ENCODE measurements at regions of chr14 and their contacts with region 1.

Region 1: GRCh38 chr14:100662879-100663760 is 63.6 kb upstream of the DLK1 start:
- DNase-seq: peak; percentile 20
- H3K4me3 ChIP-seq: no peak overlapping the region
- H3K27ac ChIP-seq: no peak overlapping the region
- H3K4me1 ChIP-seq: no peaks in the 10 kb centered on the region
- H3K27me3 ChIP-seq: no peaks in the 10 kb centered on the region
- CTCF ChIP-seq: peak; percentile 86 to 89

Region 2: DNA sequence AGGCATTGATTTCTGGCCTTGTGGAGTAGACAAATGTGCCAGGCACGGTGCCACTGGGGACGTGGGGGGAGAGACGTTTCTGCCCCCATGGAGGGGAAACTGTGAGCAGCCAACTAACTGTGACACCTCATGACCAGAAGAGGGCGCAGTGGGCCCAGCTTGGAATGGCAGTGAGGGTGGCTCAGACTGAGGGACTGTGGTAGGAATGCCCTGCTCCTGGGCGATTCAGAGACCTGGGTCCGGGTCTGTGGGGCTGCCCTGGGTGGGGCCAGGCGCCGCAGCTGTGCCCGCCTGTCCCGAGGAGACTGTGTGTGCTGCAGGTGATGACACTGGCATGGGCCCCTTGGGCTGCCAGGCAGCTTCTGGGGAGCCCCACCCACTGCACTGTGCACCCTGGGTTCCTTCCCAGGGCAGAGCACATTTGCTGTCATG is 279.4 kb before region 1 on chr14:
- CTCF ChIA-PET with region 1: no interaction called
- dilution Hi-C with region 1: no loop called
- in situ Hi-C with region 1: no loop called
- intact Hi-C with region 1: no loop called
- DNase-seq: peak; percentile 35
- H3K4me3 ChIP-seq: no peak overlapping the region
- H3K27ac ChIP-seq: no peak overlapping the region
- H3K4me1 ChIP-seq: peaks cover 17% of the 10 kb centered on the region
- H3K27me3 ChIP-seq: no peaks in the 10 kb centered on the region
- CTCF ChIP-seq: peak; percentile 88 to 91

Region 3: DNA sequence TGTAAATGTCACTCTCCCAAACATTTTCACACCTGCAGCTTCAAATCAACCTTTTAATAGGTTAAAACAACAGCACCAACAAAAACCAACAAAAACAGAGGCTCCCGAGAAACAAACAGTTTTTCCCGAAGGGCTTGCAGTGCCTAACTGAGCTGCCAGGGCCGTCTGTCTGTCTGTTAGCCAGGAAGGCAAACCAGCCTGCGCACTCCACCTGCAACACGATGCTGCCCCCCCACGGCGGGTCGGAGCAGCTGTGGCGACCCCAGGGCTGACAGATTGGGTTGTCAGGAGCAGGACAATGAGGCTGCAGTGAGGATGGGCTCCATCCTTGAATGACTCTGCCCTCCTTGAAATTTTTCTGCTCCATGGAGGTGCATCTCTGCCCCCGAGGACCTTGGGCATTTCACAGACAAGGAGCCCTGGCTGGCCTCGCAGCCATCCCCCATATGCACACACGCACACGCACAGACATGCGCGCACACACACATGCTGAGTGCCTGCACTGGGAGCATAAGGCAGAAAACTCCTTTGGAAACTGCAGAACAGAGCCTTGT is 237.8 kb after region 1 on chr14:
- CTCF ChIA-PET with region 1: no interaction called
- dilution Hi-C with region 1: no loop called
- in situ Hi-C with region 1: no loop called
- intact Hi-C with region 1: loop called (anchors 5 kb)
- DNase-seq: no peak
- H3K4me3 ChIP-seq: no peak overlapping the region
- H3K27ac ChIP-seq: no peak overlapping the region
- H3K4me1 ChIP-seq: no peaks in the 10 kb centered on the region
- H3K27me3 ChIP-seq: peaks cover 2% of the 10 kb centered on the region
- CTCF ChIP-seq: peak in 1 of 2 donors; percentile 29

Region 4: GRCh38 chr14:101083564-101084435 is 420.7 kb after region 1 on chr14:
- CTCF ChIA-PET with region 1: no interaction called
- dilution Hi-C with region 1: no loop called
- in situ Hi-C with region 1: no loop called
- intact Hi-C with region 1: loop called (anchors 5 kb)
- DNase-seq: no peak
- H3K4me3 ChIP-seq: no peak overlapping the region
- H3K27ac ChIP-seq: no peak overlapping the region
- H3K4me1 ChIP-seq: no peaks in the 10 kb centered on the region
- H3K27me3 ChIP-seq: no peaks in the 10 kb centered on the region
- CTCF ChIP-seq: peak in 1 of 2 donors; percentile 24

Region 5: DNA sequence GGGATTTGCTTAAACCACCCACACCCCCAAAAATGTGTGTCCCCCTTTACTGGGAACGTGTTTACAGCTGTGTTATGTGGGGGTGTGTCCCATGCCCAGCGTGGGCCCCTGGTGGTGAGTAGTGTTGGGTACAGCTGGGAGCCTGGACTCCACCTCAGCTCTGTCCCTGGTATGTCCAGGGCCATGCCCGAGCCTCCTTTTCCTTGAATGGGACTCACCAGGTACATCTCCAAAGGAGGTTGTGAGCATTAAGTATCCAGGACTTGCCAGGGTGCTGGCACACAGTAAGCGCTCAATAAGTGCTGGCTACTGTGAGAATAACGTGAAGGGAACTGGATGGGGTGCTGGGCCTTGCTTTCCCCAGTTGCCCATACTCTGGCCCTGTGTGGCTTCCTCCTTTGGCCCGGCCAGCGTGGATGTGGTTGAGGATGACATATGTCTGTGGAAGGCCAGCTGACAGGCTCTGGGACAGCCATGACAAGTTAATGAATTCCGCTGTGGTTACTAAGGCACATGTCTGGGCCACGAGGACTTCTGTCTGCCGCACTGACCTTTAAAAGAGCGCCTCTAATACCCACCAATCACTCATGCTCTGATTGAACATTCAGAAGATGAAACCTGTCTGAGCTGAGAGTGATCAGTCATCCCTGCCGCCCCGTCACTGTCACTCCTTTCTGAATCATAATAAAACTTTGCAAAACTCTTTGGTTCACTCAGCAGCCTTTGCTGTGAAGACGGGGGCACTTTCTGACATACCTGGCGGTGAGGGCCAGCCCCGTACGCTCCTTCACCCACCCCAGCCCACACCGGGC is 972.8 kb after region 1 on chr14:
- CTCF ChIA-PET with region 1: no interaction called
- dilution Hi-C with region 1: no loop called
- in situ Hi-C with region 1: loop called (anchors 10 to 25 kb)
- intact Hi-C with region 1: no loop called
- DNase-seq: no peak
- H3K4me3 ChIP-seq: no peak overlapping the region
- H3K27ac ChIP-seq: no peak overlapping the region
- H3K4me1 ChIP-seq: no peaks in the 10 kb centered on the region
- H3K27me3 ChIP-seq: no peaks in the 10 kb centered on the region
- CTCF ChIP-seq: no peak